Calu3 (cell line): ENCODE measurements at regions of chr5 and their contacts with region 1.

Region 1: GRCh38 chr5:217860-218456 is at the starts of genes CCDC127 and SDHA:
- DNase-seq: peak; percentile 98
- H3K4me3 Mint-ChIP-seq: peak within 1 kb of the TSS; percentile 78
- H3K27ac Mint-ChIP-seq: peak within 1 kb of the TSS; percentile 56
- H3K4me1 Mint-ChIP-seq: peaks cover 37% of the 10 kb centered on the region
- H3K27me3 Mint-ChIP-seq: no peaks in the 10 kb centered on the region
- CTCF ChIP-seq: peak; percentile 30
- total RNA-seq, gene CCDC127: 7.3 and 7.8 TPM in 2 replicates
- total RNA-seq, gene SDHA: 96.9 and 107 TPM in 2 replicates

Region 2: DNA sequence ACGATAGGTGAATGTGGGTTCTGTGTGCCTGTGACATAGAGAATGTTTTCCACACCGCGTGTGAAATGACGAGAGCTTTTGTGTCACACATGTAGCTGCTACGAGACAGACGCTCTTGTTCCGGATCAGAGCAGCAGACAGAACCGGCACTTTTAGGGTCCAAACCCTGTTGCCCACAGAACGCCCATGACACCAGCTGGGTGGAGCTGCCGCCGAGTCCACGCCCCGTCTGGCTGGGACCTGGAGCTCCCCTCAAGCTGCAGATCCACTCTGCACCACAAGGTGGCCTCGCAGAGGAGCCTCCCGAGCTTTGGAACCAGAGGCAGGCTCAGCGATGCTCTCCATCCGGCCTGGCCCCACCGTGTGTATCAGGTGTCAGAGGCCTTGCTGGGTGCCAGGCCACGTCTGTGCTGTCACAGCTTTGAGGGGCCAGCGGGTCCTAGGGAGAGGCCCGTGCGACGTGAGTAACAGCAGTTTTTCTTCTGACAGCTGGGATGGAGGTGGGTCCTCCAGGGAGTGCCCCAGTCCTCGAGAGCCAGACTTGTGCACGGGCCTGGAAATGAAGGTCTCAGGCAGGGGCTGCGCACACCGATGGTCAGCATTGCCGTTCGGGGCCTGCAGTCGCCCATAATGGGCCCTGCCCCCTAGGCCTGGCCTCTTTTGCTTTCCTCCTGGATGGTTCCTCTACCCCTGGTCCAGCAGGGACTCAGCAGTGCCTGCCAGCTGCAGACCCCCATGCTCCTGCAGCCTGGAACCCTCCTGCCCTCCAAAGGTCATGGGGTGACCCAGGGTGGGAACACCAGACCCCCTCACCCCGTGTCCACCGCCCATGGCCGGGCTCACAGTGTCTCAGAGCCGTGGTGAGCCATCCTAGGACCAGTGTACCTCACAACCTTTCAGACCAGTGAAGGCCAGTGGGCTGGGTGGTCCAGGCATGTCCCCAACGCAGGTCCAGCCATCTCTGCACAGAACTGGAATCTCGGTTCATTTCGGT is 29.2 kb before region 1 on chr5:
- CTCF ChIA-PET with region 1: interaction called, 11 read pairs
- intact Hi-C with region 1: no loop called
- DNase-seq: peak; percentile 91
- H3K4me3 Mint-ChIP-seq: peak overlapping the region; percentile 56
- H3K27ac Mint-ChIP-seq: no peak overlapping the region
- H3K4me1 Mint-ChIP-seq: peaks cover 9% of the 10 kb centered on the region
- H3K27me3 Mint-ChIP-seq: peaks cover 34% of the 10 kb centered on the region
- CTCF ChIP-seq: peak; percentile 90

Region 3: DNA sequence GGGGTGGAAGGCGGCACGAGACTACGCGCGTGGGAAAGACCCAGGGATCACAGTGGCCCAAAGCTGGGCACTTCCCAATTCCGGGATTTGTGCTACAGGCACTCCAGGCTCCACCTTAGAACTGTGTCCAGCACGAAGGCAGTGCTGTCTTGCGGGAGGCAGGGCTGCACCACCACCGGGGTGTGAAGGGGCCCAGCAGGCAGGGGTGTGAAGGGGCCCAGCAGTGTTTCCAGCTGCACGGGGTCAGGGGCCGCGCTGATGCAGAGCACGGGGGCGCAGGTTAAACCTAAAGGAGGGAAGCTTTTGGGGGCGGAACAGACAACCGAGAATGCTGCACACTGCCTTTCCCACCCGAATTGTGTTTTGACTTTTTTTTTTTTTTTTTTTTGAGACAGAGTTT is 52.4 kb after region 1 on chr5:
- CTCF ChIA-PET with region 1: interaction called, 6 read pairs
- intact Hi-C with region 1: loop called (anchors 1 kb)
- DNase-seq: no peak
- H3K4me3 Mint-ChIP-seq: peak overlapping the region; percentile 87
- H3K27ac Mint-ChIP-seq: peak overlapping the region; percentile 67
- H3K4me1 Mint-ChIP-seq: peaks cover 21% of the 10 kb centered on the region
- H3K27me3 Mint-ChIP-seq: no peaks in the 10 kb centered on the region
- CTCF ChIP-seq: no peak